ENCODE measurements at regions of chr2 and their contacts with region 1.

Region 1: DNA sequence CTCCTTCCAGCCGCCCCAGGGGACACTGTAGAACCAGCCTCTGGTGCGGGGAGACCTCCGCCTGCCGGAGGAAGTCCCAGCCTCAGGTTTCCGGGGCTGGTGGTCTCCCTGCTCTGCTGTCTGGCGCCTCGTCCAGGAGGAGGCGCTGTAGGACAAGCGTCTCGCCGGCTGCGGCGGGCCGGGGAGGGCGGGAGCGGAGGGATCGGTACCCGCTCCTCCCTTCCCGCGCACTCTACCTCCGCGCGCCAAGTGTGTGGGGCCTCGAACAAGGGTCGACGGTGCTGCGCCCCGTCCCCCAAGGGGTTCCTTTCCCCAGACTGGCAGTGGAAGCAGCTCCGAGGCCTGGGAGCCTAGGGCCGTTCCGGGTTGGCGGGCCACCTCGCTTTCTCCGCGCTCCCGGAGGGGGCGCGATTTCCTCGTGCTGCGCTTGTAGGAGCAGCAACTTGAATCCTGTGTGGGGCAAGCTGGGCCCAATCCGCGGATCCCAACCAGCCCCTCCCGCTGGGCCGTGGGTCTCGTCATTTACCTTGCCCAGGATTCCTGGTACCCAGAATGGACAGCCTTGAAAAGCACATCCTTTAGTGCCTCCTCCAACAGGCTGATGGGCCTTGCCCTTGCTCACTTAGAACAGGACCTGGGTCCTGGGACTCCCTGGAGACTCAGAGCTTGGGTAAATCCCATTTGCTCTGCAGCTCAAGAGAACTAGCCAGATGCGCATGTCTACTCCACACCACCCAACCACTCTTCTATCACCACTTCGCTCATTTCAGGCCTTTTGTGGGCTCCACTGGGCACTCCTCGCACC is 10.6 kb upstream of the HOXD4 start:
- DNase-seq: peak; percentile 60 to 81
- ATAC-seq: peak; percentile 69

Region 2: GRCh38 chr2:176269319-176270099 is 128.8 kb after region 1 on chr2 and contains the start of gene MTX2:
- intact Hi-C with region 1: loop called in 1 of 2 experiments (anchors 10 kb)
- DNase-seq: peak; percentile 73 to 86
- ATAC-seq: peak; percentile 98
- total RNA-seq, gene MTX2: 31.1 to 34.0 TPM

Region 3: GRCh38 chr2:176454893-176455811 is 314.4 kb after region 1 on chr2:
- intact Hi-C with region 1: loop called (anchors 2 to 10 kb)
- DNase-seq: peak; percentile 67 to 94
- ATAC-seq: peak; percentile 79

Region 4: DNA sequence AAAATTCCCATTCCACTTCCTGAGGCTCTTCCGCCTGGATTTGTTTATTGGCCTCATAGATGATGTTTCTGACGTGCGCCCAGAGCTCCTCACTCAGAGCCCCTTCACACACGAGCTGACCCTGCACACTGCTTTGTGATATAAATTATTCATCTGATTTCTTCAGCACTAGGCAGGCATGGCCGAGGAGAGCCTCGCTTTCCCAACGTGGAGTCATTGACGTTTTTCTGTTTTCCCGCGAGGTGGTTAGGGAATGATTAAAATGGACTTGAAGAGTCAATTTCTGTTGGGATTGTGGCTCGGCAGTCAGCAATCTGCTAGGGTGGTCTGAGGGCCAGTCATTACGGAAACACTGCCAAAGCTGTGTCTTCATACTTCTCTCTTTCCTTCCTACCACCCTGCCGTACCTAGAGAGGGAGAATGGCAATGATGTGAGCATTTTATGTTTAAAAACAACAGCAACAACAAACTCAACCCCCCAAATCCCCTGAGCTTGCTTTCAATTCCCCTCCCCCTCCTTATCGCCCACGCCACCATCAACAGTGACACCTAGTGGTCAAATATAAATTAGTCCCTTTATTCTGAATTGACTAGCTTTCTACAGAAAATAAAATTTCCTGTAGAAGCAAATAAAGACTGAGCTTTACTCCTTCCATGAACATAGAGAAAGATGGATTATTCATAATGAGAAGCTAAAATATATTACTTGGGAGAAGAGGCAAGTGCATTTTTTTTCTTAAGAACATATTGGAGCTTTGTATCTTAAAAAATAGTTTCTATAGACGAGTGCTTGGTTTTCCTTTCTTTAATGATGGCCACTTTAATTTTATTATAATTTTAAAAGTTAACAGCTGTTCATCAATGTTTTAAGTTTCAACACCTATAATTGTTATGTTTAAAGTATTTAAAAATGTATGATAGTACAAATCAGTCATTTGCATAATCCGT is 413.7 kb after region 1 on chr2:
- intact Hi-C with region 1: loop called (anchors 2 to 10 kb)
- DNase-seq: peak in 1 of 2 donors; percentile 22
- ATAC-seq: peak; percentile 71

Region 5: GRCh38 chr2:176565641-176566323 is 425.1 kb after region 1 on chr2:
- intact Hi-C with region 1: loop called in 1 of 2 experiments (anchors 5 kb)
- DNase-seq: no peak
- ATAC-seq: peak; percentile 25

Region 6: GRCh38 chr2:176638167-176639015 is 497.7 kb after region 1 on chr2:
- intact Hi-C with region 1: loop called in 1 of 2 experiments (anchors 5 kb)
- DNase-seq: peak; percentile 43 to 82
- ATAC-seq: peak; percentile 96